H1 (cell line): ENCODE measurements at regions of chr11 and their contacts with region 1.

Region 1: DNA sequence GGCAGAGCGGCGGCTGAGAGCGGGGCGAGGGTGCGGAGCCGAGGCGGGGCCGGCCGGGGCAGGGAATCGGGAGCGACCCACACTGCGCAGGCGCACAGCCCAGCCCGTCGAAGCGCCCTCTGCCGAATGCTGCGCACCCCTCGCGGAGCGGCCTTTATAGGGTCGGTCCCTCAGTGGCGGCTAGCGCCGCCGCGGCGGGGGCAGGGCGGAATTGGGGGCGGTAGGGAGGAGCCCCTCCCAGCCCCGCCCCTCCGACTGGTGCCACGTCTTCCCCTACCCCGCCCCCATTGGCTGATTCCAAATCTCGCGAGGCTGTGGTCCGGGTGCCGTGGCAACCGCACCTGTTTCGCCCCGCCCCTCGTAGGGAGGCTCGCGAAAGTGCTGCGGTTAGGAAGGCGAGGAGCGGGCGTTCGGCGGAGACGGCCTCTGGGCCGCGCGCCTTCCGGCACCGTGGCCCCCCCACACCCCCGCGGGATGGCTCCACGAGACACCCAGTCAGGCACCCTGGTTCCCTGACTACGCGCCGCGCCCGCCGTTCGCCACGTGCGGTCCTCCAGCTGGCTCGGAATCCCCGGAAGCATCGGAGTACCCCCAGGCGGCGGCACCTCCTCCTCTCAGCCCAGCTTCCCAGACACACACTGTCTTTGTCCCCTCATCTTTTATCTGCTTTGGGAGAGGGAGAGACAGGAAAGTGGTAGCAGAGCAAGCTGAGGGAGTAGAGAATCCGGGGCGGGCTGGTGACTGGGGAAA is at the start of gene EHD1:
- DNase-seq: peak; percentile 94 to 99
- H3K4me3 ChIP-seq: peak within 1 kb of the TSS; percentile 60 to 97 (median 94)
- H3K27ac ChIP-seq: peak within 1 kb of the TSS; percentile 71
- H3K4me1 ChIP-seq: peaks cover 0 to 22% (median 11%) of the 10 kb centered on the region in 4 experiments; a peak in 6 of 7 replicates
- H3K27me3 ChIP-seq: peaks cover 0 to 6% (median 2%) of the 10 kb centered on the region in 4 experiments; a peak in 3 of 7 replicates
- CTCF ChIP-seq: peak; percentile 66 to 76 (median 71)
- EP300 ChIP-seq: no peak
- POLR2A ChIP-seq: peak in 1 of 2 experiments; percentile 92; a peak in 2 of 3 replicates
- RAD21 ChIP-seq: 0 out of 4 replicates have a peak, but pooled peaks of 1 of the 2 experiments have one; percentile 24
- total RNA-seq, gene EHD1: 36.9 and 42.9 TPM in 2 replicates

Region 2: DNA sequence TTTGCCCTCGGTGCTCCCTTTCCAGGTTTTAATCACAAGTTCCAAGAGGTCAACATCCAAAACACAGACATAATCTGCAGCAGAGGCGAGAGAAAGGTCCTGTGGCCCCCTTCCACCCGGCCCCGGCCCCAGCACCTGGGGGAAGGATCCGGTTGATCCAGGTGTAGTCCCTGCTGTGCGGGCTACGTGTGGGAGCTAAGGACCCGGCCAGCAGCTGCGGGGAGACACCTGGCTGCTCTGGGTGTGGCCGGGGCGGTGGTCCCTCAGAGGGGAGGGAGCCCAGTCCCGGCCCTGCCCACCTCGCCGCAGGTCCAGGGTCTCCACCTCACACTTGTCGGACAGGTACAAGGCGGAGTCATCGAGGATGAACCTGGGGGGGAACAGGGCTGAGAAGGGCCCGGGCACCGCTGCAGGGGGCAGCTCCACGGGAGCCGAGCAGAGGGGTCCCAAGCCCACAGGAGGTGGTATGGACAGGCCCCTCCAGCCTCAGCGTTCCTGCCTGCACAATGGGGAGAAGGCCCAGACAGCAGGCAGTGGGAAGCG is 24.7 kb after region 1 on chr11:
- CTCF ChIA-PET with region 1: no interaction called
- POLR2A ChIA-PET with region 1: no interaction called
- DNase-seq: no peak
- H3K4me3 ChIP-seq: no peak overlapping the region
- H3K27ac ChIP-seq: no peak overlapping the region
- H3K4me1 ChIP-seq: no peaks in the 10 kb centered on the region
- H3K27me3 ChIP-seq: no peaks in the 10 kb centered on the region
- CTCF ChIP-seq: no peak
- EP300 ChIP-seq: no peak
- POLR2A ChIP-seq: no peak
- RAD21 ChIP-seq: no peak

Region 3: GRCh38 chr11:64924102-64924851 is 45.6 kb after region 1 on chr11 and contains the start of gene PPP2R5B:
- CTCF ChIA-PET with region 1: interaction called, 4 read pairs
- POLR2A ChIA-PET with region 1: interaction called, 11 read pairs
- DNase-seq: peak; percentile 69 to 87
- H3K4me3 ChIP-seq: peak within 1 kb of the TSS; percentile 39 to 84 (median 55)
- H3K27ac ChIP-seq: peak within 1 kb of the TSS; percentile 71
- H3K4me1 ChIP-seq: peaks cover 0 to 7% (median 4%) of the 10 kb centered on the region in 4 experiments; a peak in 5 of 7 replicates
- H3K27me3 ChIP-seq: peaks cover 0 to 6% (median 4%) of the 10 kb centered on the region in 4 experiments; a peak in 4 of 7 replicates
- CTCF ChIP-seq: no peak
- EP300 ChIP-seq: no peak
- POLR2A ChIP-seq: no peak
- RAD21 ChIP-seq: no peak
- total RNA-seq, gene PPP2R5B: 5.1 and 5.8 TPM in 2 replicates

Region 4: GRCh38 chr11:65301491-65302329 is 423.0 kb after region 1 on chr11:
- CTCF ChIA-PET with region 1: no interaction called
- POLR2A ChIA-PET with region 1: no interaction called
- DNase-seq: peak in 1 of 2 experiments; percentile 76
- H3K4me3 ChIP-seq: 0 out of 8 replicates have a peak overlapping the region, but pooled peaks of 1 of the 4 experiments have one; percentile 7
- H3K27ac ChIP-seq: no peak overlapping the region; the same call in 1 of the 2 replicates
- H3K4me1 ChIP-seq: peaks cover 0 to 12% (median 9%) of the 10 kb centered on the region in 4 experiments; a peak in 6 of 7 replicates
- H3K27me3 ChIP-seq: peaks cover 0 to 2% (median 0%) of the 10 kb centered on the region in 4 experiments; a peak in 3 of 7 replicates
- CTCF ChIP-seq: no peak
- EP300 ChIP-seq: no peak
- POLR2A ChIP-seq: no peak; a peak in 1 of 3 replicates
- RAD21 ChIP-seq: no peak